PC-3 (cell line): ENCODE measurements at regions of chr1 and their contacts with region 1.

Region 1: DNA sequence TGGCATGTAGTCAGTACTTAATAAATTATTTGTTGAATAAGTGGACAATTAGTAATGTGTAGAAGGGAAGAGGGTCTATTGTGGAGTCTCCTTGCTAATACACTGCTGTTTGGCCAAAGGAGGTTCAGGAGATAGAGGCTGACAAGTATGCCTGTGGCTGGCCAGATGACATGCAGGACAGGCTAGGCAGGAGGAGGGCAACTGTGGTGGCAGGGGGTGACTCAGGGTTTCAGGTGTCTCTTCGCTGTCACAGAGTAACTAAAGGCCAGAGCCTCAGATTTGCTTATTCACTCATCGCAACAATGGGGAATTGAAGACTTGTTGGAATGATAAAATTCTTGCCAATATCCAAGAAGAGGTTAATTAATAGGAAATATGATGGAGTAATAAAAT is 33.1 kb downstream of the THRAP3 start:
- DNase-seq: peak; percentile 78
- ATAC-seq: peak; percentile 82
- H3K4me3 ChIP-seq: no peak overlapping the region
- H3K27ac ChIP-seq: peak overlapping the region; percentile 62
- H3K4me1 ChIP-seq: peaks cover 45% of the 10 kb centered on the region
- H3K27me3 ChIP-seq: no peaks in the 10 kb centered on the region
- CTCF ChIP-seq: no peak

Region 2: GRCh38 chr1:36123356-36123755 is 134.0 kb before region 1 on chr1:
- CTCF ChIA-PET with region 1: no interaction called
- POLR2A ChIA-PET with region 1: no interaction called
- intact Hi-C with region 1: no loop called
- DNase-seq: no peak
- ATAC-seq: no peak
- H3K4me3 ChIP-seq: no peak overlapping the region
- H3K27ac ChIP-seq: no peak overlapping the region
- H3K4me1 ChIP-seq: no peaks in the 10 kb centered on the region
- H3K27me3 ChIP-seq: peaks cover 9% of the 10 kb centered on the region; the same call in 1 of the 2 replicates
- CTCF ChIP-seq: no peak

Region 3: GRCh38 chr1:36198641-36199040 is 58.7 kb before region 1 on chr1:
- CTCF ChIA-PET with region 1: no interaction called
- POLR2A ChIA-PET with region 1: no interaction called
- intact Hi-C with region 1: no loop called
- DNase-seq: no peak
- ATAC-seq: no peak
- H3K4me3 ChIP-seq: no peak overlapping the region
- H3K27ac ChIP-seq: no peak overlapping the region
- H3K4me1 ChIP-seq: peaks cover 13% of the 10 kb centered on the region; the same call in 1 of the 2 replicates
- H3K27me3 ChIP-seq: no peaks in the 10 kb centered on the region
- CTCF ChIP-seq: no peak

Region 4: DNA sequence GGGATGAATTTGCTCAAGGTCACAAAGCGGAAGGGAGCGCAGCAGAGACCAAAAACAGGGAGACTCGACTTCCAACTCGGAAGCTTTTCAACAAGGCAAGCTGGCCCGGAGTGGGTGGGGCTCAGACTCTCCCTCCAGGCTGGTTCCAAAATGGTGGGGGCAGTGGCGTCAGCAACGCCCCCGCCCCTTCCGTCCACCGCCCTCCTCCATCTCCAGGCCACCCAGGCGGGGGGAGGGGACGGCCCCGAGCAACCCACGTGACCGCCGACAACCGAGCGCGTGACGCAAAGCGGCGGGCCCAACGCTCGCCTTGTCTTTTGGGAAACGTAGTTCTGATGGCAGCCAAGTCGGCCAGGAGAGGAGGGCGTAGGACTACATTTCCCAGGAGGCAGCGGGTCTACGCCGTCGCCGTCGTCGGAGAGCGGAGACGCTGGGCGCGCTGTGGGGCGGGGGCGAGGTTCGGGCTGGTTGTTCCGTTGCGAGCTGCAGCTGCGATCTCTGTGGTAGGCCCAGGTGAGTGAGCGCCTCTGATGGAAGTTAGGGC is 33.3 kb before region 1 on chr1 and contains the start of gene THRAP3:
- CTCF ChIA-PET with region 1: no interaction called
- POLR2A ChIA-PET with region 1: no interaction called
- intact Hi-C with region 1: loop called (anchors 2 kb)
- DNase-seq: peak; percentile 99
- ATAC-seq: peak; percentile 96
- H3K4me3 ChIP-seq: peak within 1 kb of the TSS; percentile 100
- H3K27ac ChIP-seq: peak within 1 kb of the TSS; percentile 93
- H3K4me1 ChIP-seq: peaks cover 15% of the 10 kb centered on the region
- H3K27me3 ChIP-seq: no peaks in the 10 kb centered on the region
- CTCF ChIP-seq: no peak
- total RNA-seq, gene THRAP3: 55.7 and 67.0 TPM in 2 replicates

Region 5: DNA sequence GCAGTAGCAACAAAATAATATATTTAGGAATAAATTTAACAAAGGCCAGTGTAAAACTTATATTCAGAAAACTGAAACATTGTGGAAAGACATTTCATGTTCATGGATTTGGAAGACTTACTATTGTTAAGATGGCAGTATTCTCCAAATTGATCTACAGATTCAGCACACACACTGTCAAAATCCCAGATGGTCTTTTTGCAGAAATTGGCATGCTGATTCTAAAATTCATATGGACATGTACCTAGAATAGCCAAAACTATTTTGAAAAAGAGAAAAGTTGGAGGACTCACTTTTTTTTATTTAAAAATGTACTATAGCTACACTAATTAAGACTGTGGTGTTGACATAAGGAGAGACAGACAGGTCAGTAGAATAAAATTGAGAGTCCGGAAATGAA is 16.8 kb after region 1 on chr1:
- CTCF ChIA-PET with region 1: no interaction called
- POLR2A ChIA-PET with region 1: interaction called, 19 read pairs
- intact Hi-C with region 1: no loop called
- DNase-seq: no peak
- ATAC-seq: no peak
- H3K4me3 ChIP-seq: no peak overlapping the region
- H3K27ac ChIP-seq: no peak overlapping the region
- H3K4me1 ChIP-seq: no peaks in the 10 kb centered on the region
- H3K27me3 ChIP-seq: no peaks in the 10 kb centered on the region
- CTCF ChIP-seq: no peak